Activated CD8-positive, alpha-beta T cell treated with anti-CD3 and anti-CD28 coated beads for 36 hours (primary cell): ENCODE measurements at regions of chr7 and their contacts with region 1.

Region 1: GRCh38 chr7:103412151-103412550 is 33.9 kb downstream of the SLC26A5 start:
- DNase-seq: no peak
- ATAC-seq: no peak
- H3K4me3 Mint-ChIP-seq: no peak overlapping the region
- H3K27ac Mint-ChIP-seq: no peak overlapping the region
- H3K4me1 Mint-ChIP-seq: no peaks in the 10 kb centered on the region
- H3K27me3 Mint-ChIP-seq: peaks cover 2% of the 10 kb centered on the region
- CTCF ChIP-seq: no peak

Region 2: DNA sequence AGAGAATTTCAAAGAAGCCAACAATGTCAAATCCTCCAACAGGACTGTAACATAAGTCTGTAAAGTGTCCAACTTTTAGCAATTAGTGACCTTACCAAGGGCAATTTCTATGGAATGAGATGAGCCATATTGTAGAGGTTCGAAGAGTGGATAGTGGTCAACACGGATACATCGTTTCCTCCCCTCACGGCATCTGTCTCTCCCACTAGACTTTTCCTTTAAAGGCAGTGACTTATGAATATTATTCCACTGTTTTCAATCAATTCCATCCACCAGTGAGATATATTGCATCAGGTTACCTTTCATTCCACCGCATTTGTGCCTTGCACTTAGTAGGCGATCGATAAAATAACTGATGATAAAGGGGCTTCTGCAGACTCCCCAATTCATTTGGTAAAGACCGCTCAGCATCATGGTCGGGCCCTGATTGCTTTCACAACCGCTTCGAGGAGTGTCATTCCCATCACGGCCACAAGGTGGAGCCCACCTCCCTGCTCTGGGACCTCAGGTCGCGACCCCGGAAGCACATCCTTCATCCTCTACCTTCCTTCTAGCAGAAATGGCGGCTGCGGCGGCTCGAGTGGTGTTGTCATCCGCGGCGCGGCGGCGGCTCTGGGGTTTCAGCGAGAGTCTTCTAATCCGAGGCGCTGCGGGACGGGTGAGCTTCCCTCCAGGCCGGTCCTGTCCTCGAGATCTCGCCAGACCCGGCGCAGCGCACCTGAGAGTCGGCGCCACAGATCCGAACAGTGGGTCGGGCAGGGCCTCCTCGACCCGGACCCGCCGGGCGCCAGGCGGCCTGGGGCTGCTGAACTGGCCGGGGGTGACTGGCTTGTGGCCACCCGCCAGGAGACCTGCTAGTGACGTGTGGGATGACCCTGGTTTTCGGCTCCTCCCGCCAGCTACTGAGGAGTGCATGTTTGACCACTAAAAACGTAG is 115.0 kb before region 1 on chr7 and contains the start of gene PMPCB:
- CTCF ChIA-PET with region 1: interaction called, 3 read pairs
- POLR2A ChIA-PET with region 1: interaction called, 4 read pairs
- intact Hi-C with region 1: loop called (anchors 1 kb)
- DNase-seq: peak; percentile 99
- ATAC-seq: peak; percentile 99
- H3K4me3 Mint-ChIP-seq: peak within 1 kb of the TSS; percentile 98
- H3K27ac Mint-ChIP-seq: peak within 1 kb of the TSS; percentile 91
- H3K4me1 Mint-ChIP-seq: peaks cover 26% of the 10 kb centered on the region
- H3K27me3 Mint-ChIP-seq: no peaks in the 10 kb centered on the region
- CTCF ChIP-seq: peak; percentile 86
- total RNA-seq, gene PMPCB: 80.5 to 89.3 TPM

Region 3: DNA sequence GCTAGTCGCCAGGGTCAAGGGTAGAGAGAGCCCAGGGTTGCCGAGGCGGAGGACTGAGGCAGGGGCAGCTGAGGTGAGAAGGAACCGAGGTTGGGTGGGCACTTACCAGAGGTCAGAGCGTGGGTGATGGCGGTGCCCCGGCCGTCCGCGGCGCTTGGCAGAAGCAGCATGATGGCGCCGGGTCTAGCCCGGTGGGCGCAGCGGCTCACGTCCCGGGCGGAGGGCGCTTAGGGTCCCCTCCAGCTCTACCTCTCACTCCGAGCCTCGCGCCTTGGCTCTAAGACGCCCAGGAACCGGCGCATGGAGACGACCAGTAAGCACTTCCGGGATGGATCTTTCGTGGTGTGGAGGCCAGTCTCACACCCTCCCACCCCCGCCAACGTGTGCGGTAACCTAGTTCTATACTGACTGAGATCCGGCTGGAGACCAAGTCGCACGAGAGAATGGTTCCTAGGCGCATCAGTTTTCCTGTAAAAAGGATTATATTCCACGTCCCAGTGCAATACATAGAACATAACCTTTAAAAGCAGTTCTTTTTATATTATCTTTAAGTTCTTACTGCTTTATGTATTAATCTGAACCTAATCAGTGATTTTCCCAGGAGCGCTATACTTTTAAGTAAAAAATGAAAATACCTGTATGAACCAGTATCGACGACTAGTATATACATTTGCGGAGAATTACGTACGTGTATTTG is 67.5 kb before region 1 on chr7 and contains the start of gene DNAJC2:
- CTCF ChIA-PET with region 1: no interaction called
- POLR2A ChIA-PET with region 1: no interaction called
- intact Hi-C with region 1: no loop called
- DNase-seq: peak; percentile 93
- ATAC-seq: peak; percentile 83
- H3K4me3 Mint-ChIP-seq: peak within 1 kb of the TSS; percentile 94
- H3K27ac Mint-ChIP-seq: peak within 1 kb of the TSS; percentile 99
- H3K4me1 Mint-ChIP-seq: peaks cover 44% of the 10 kb centered on the region
- H3K27me3 Mint-ChIP-seq: no peaks in the 10 kb centered on the region
- CTCF ChIP-seq: no peak
- total RNA-seq, gene DNAJC2: 45.8 to 48.9 TPM